T-cell (primary cell): ENCODE measurements at regions of chr5 and their contacts with region 1.

Region 1: DNA sequence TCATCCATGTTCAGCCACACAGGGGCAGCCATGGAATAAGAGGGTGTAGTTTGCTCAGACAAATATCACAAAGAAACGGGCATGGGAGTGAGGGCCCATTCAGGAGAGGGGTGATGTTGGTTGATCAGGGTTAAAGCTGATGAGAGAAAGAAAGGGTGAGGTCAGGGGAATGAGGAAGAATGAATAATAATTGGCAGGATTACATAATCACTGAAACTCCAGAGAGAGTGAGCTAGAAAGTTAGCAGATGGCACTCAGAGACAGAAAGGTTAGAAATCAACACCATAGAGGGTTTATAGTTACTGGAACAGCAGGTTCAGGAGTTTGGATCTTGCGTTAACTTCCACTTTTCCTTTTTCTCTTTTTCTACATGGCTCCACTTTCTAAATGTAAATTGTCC is 113.9 kb downstream of the TAF11L14 start:
- DNase-seq: no peak
- ATAC-seq: no peak
- H3K4me3 ChIP-seq: no peak overlapping the region
- H3K4me3 Mint-ChIP-seq: no peak overlapping the region
- H3K27ac ChIP-seq: no peak overlapping the region
- H3K27ac Mint-ChIP-seq: no peak overlapping the region
- H3K4me1 ChIP-seq: no peaks in the 10 kb centered on the region
- H3K4me1 Mint-ChIP-seq: no peaks in the 10 kb centered on the region
- H3K27me3 ChIP-seq: no peaks in the 10 kb centered on the region
- H3K27me3 Mint-ChIP-seq: no peaks in the 10 kb centered on the region

Region 2: DNA sequence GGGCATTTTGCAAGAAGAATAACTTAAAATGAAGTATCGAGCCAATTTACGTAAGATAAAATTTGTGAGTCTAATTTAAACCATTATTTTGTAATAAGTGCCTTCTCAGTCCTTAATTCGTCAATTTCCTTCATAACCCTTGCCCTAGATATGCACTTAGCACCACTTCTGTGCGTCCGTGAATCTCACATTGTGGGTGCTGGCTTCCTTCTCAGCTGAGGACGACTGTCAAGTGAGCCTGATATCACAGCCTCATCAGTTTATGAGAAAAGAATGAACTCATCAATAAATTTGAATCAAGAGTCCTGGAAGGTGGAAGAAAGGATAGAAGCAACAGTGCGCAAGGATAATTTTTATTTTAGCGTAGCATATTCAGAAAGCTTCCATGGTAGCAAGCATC is 1633.1 kb before region 1 on chr5:
- CTCF ChIA-PET with region 1: no interaction called
- POLR2A ChIA-PET with region 1: no interaction called
- DNase-seq: no peak
- ATAC-seq: no peak
- H3K4me3 ChIP-seq: no peak overlapping the region
- H3K4me3 Mint-ChIP-seq: no peak overlapping the region
- H3K27ac ChIP-seq: no peak overlapping the region
- H3K27ac Mint-ChIP-seq: no peak overlapping the region
- H3K4me1 ChIP-seq: no peaks in the 10 kb centered on the region
- H3K4me1 Mint-ChIP-seq: no peaks in the 10 kb centered on the region
- H3K27me3 ChIP-seq: no peaks in the 10 kb centered on the region
- H3K27me3 Mint-ChIP-seq: peaks cover 0 to 4% of the 10 kb centered on the region in 2 donors

Region 3: DNA sequence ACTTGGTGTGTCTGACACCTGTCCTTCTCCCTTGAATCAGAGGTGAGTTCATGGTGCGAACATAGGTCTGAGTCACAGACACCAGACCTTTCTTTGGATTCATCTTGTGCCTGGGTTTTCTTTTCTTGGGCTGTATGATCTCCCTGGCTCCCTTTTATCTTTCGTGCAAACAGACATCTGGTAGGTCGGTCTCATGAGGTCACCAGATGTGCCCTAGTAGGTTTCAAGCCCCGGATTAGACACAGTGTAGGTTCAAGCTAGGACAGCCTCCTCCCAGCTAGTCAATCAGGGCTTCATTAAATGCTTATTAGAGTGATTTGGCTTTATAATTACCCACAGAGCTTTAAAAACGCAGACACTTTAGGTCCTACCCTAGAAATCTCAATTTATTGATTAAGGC is 706.2 kb before region 1 on chr5:
- CTCF ChIA-PET with region 1: no interaction called
- POLR2A ChIA-PET with region 1: no interaction called
- DNase-seq: no peak
- ATAC-seq: no peak
- H3K4me3 ChIP-seq: no peak overlapping the region
- H3K4me3 Mint-ChIP-seq: no peak overlapping the region
- H3K27ac ChIP-seq: no peak overlapping the region
- H3K27ac Mint-ChIP-seq: no peak overlapping the region
- H3K4me1 ChIP-seq: no peaks in the 10 kb centered on the region
- H3K4me1 Mint-ChIP-seq: no peaks in the 10 kb centered on the region
- H3K27me3 ChIP-seq: no peaks in the 10 kb centered on the region
- H3K27me3 Mint-ChIP-seq: no peaks in the 10 kb centered on the region

Region 4: GRCh38 chr5:17785774-17786173 is 37.6 kb after region 1 on chr5:
- CTCF ChIA-PET with region 1: no interaction called
- POLR2A ChIA-PET with region 1: interaction called in 1 of 2 experiments, 17 read pairs
- DNase-seq: no peak
- ATAC-seq: no peak
- H3K4me3 ChIP-seq: no peak overlapping the region
- H3K4me3 Mint-ChIP-seq: no peak overlapping the region
- H3K27ac ChIP-seq: no peak overlapping the region
- H3K27ac Mint-ChIP-seq: no peak overlapping the region
- H3K4me1 ChIP-seq: no peaks in the 10 kb centered on the region
- H3K4me1 Mint-ChIP-seq: no peaks in the 10 kb centered on the region
- H3K27me3 ChIP-seq: no peaks in the 10 kb centered on the region
- H3K27me3 Mint-ChIP-seq: no peaks in the 10 kb centered on the region